ENCODE measurements at regions of chr17 and their contacts with region 1.

Region 1: DNA sequence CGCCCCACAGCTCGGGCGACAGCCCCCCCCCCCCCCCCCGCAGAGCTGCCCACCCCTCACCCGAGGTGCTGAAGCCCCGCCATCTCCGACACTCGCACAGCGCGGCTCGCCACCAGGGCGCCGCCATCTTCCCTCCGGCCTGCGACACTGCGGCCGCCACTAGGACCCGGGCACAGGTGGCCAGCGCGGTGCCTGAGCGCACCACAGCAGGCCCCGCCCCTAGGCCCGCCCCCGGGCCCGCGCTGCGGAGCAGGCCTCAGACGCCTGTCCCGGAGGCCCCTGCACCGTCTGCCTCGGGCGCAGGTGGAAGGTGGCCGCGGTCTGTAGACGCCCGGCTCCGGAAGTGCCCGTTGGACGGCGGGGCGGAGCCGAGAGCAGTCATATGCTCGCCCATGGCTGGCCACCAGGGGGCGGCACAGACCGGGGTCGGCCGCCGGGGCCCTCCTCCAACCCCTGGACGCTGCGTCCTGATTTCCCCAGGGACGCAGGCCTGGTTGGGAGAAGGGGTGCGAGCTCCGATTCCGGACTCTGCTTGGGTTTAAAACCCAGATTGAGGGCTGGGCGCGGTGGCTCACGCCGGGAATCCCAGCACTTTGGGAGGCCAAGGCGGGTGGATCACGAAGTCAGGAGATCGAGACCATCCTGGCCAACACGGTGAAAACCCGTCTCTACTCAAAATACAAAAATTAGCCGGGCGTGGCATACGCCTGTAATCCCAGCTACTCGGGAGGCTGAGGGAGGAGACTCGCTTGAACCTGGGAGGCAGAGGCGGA is at the start of gene MRPL38:
- DNase-seq: peak; percentile 91
- H3K4me3 ChIP-seq: peak within 1 kb of the TSS; percentile 97
- H3K27ac ChIP-seq: peak within 1 kb of the TSS; percentile 96
- H3K4me1 ChIP-seq: peaks cover 37% of the 10 kb centered on the region
- H3K27me3 ChIP-seq: no peaks in the 10 kb centered on the region
- CTCF ChIP-seq: peak; percentile 100
- total RNA-seq, gene MRPL38: 104 TPM

Region 2: DNA sequence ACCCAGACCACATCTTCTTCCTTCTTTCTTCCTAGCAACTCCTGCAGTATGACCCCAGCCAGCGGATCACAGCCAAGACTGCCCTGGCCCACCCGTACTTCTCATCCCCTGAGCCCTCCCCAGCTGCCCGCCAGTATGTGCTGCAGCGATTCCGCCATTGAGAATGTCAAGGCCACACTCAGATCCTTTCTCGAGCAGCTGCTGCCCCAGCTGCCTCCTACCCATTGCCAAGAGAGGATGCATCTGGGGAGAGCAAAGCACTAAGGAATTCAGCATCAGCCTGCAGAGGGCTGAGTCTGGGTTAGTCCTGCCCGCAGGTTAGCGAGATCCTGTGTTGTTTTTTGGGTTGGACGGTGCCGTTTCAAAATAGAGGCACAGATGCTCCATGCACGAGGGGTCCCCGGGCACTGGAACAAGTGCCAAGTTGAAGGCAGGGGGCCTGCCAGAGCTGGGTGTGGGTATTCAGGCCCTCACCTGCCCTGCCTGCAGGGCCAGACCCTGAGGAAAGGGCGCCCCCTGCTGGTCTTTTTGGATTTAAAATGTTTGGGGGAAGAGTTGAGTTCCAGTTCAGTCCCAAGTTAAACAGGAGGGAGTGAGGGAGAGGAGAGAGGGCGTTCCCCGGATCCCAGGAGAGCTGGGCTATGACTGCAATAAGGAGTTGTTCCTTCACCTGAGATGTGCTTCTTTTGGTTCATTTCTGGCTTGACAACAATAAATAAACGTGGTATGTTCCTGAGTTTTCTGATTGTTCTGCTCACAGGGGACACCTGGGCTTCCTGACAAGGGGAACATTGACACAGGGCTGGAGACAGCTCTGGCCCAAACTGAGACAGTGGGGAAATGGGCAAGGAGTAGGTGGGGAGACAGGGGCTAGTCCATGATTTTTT is 100.6 kb after region 1 on chr17:
- intact Hi-C with region 1: loop called (anchors 5 kb)
- DNase-seq: peak; percentile 50
- H3K4me3 ChIP-seq: no peak overlapping the region
- H3K27ac ChIP-seq: peak overlapping the region; percentile 7
- H3K4me1 ChIP-seq: peaks cover 17% of the 10 kb centered on the region
- H3K27me3 ChIP-seq: no peaks in the 10 kb centered on the region
- CTCF ChIP-seq: peak; percentile 77

Region 3: DNA sequence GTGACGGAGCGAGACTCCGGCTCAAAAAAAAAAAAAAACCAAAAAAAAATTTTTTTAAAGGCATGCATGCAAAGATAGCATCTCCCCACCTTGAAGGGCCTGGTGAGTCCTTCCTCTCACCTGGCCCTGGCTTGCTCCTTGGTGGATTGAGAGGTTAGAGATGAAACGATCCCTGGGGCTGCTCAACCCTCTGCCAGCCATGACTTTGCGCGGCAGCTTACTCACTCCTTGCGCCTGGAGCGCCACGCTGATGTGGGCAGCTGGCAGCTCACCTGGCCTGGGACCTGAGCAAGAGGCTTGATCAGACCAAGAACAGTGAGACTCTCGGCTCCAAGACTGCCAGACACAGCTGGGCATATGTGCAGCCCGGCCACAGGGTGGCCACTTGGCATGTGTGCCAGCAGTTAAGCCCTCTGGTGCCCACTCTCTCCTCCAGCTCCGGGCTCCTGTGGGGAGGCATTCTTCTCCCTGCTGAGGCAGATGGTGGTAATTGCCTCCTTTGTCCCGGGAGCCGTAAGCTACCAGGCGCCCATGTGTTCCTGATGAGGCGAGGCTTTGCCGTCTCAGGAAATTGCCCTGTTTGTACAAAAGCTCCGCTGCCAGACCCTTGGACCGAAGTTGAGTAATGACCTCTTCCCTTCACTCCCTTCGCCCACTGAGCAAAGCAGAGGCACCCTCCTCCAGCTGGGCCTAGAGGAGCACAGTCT is 127.3 kb after region 1 on chr17:
- intact Hi-C with region 1: no loop called
- DNase-seq: no peak
- H3K4me3 ChIP-seq: no peak overlapping the region
- H3K27ac ChIP-seq: no peak overlapping the region
- H3K4me1 ChIP-seq: peaks cover 15% of the 10 kb centered on the region
- H3K27me3 ChIP-seq: no peaks in the 10 kb centered on the region
- CTCF ChIP-seq: no peak